CD8-positive, alpha-beta T cell (primary cell): ENCODE measurements at regions of chr10 and their contacts with region 1.

Region 1: DNA sequence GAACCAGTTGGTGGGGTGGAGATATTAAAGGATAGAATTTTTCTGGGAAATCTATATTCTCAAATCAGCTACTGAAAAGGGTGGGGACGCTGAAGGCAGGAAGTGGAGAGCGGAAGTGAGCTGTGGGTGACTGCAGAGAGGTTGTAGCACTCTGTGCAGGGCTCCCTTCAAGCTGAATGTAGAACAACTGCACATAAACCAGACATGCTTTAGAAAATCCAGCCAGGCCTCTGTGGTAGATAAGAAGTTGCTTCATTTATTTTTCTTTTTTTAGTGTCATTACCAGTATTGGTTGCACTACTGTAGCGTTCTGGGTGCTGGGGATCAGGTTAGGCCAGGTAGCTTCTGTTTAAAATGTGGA is 127.8 kb downstream of the CELF2 start:
- DNase-seq: peak in 8 of 9 experiments; percentile 61 to 90 (median 78)
- ATAC-seq: peak; percentile 62
- H3K4me3 ChIP-seq: peak overlapping the region; percentile 18 to 30
- H3K4me3 Mint-ChIP-seq: peak overlapping the region; percentile 66
- H3K27ac ChIP-seq: peak overlapping the region; percentile 53 to 88
- H3K27ac Mint-ChIP-seq: peak overlapping the region; percentile 95
- H3K4me1 ChIP-seq: peaks cover 96% of the 10 kb centered on the region
- H3K4me1 Mint-ChIP-seq: peaks cover 97% of the 10 kb centered on the region
- H3K27me3 ChIP-seq: no peaks in the 10 kb centered on the region
- H3K27me3 Mint-ChIP-seq: no peaks in the 10 kb centered on the region
- CTCF ChIP-seq: no peak

Region 2: GRCh38 chr10:11157292-11158076 is 12.0 kb after region 1 on chr10:
- CTCF ChIA-PET with region 1: interaction called, 26 read pairs
- POLR2A ChIA-PET with region 1: interaction called, 23 read pairs
- intact Hi-C with region 1: no loop called
- DNase-seq: peak in 3 of 9 experiments; percentile 8 to 64 (median 45)
- ATAC-seq: peak; percentile 48
- H3K4me3 ChIP-seq: peak overlapping the region in 1 of 2 experiments; percentile 1
- H3K4me3 Mint-ChIP-seq: peak overlapping the region; percentile 42
- H3K27ac ChIP-seq: no peak overlapping the region
- H3K27ac Mint-ChIP-seq: peak overlapping the region; percentile 85
- H3K4me1 ChIP-seq: peaks cover 96% of the 10 kb centered on the region
- H3K4me1 Mint-ChIP-seq: peaks cover 95% of the 10 kb centered on the region
- H3K27me3 ChIP-seq: no peaks in the 10 kb centered on the region
- H3K27me3 Mint-ChIP-seq: no peaks in the 10 kb centered on the region
- CTCF ChIP-seq: no peak

Region 3: DNA sequence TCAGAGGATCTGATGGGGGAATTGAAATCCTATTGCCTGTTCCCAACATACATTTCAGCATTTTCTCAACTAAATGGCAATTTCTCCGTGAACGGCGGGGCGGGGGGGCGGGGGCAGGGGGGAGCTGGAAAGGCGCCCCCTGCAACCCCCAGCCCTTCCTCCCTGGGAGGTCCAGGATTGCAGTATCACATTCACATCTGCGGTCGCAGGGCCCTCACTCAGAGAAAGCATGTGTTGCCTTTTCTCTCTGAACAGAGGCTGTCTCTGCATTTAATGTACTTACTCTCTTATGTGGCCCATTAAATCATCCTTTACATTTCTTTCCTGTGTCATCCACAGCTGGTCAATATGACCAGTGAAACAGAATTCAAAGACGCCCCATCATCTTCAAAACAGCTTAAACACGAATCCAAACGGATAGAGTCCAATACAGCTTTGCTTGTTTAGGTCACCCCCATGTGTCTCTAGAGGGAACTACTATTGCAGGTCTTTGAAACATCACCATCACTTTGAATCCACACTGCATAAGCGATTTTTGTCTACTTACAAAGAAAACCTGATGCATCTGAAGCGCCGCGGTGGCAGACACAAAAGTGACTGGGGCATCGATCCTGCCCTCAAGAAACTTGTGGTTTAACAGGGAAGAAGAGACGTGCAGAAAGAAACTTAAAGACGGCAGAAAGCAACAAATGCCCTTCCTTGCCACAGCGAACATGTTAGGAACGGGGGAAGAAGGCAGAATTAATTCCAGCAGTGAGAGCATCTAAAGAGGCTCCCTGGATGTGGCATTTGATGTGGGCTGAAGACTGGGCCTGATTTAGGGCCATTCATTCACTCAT is 579.7 kb after region 1 on chr10:
- CTCF ChIA-PET with region 1: no interaction called
- POLR2A ChIA-PET with region 1: no interaction called
- intact Hi-C with region 1: no loop called
- DNase-seq: peak in 2 of 9 experiments; percentile 48 to 68
- ATAC-seq: peak; percentile 73
- H3K4me3 ChIP-seq: no peak overlapping the region
- H3K4me3 Mint-ChIP-seq: no peak overlapping the region
- H3K27ac ChIP-seq: no peak overlapping the region
- H3K27ac Mint-ChIP-seq: no peak overlapping the region
- H3K4me1 ChIP-seq: no peaks in the 10 kb centered on the region
- H3K4me1 Mint-ChIP-seq: peaks cover 4% of the 10 kb centered on the region
- H3K27me3 ChIP-seq: no peaks in the 10 kb centered on the region
- H3K27me3 Mint-ChIP-seq: peaks cover 8% of the 10 kb centered on the region
- CTCF ChIP-seq: peak; percentile 79